Sigmoid colon (tissue), 7 donors: ENCODE measurements at regions of chr15 and their contacts with region 1.

Region 1: GRCh38 chr15:36658312-36658711 is 78.9 kb downstream of the CDIN1 start:
- DNase-seq: no peak
- H3K4me3 ChIP-seq: no peak overlapping the region
- H3K27ac ChIP-seq: no peak overlapping the region
- H3K4me1 ChIP-seq: peaks cover 0 to 32% (median 12%) of the 10 kb centered on the region in 4 donors
- H3K27me3 ChIP-seq: no peaks in the 10 kb centered on the region
- CTCF ChIP-seq: no peak
- EP300 ChIP-seq: peak in 1 of 4 donors; percentile 23
- POLR2A ChIP-seq: no peak

Region 2: GRCh38 chr15:36579792-36580431 is 78.4 kb before region 1 on chr15:
- intact Hi-C with region 1: loop called (anchors 5 kb)
- DNase-seq: peak; percentile 70
- H3K4me3 ChIP-seq: peak overlapping the region; percentile 58 to 76 (median 62)
- H3K27ac ChIP-seq: peak overlapping the region; percentile 82 to 88 (median 84)
- H3K4me1 ChIP-seq: peaks cover 0 to 21% (median 14%) of the 10 kb centered on the region in 4 donors
- H3K27me3 ChIP-seq: no peaks in the 10 kb centered on the region
- CTCF ChIP-seq: no peak
- EP300 ChIP-seq: no peak
- POLR2A ChIP-seq: no peak

Region 3: GRCh38 chr15:36810656-36811449 is 152.5 kb after region 1 on chr15:
- intact Hi-C with region 1: no loop called
- DNase-seq: no peak
- H3K4me3 ChIP-seq: no peak overlapping the region
- H3K27ac ChIP-seq: peak overlapping the region; percentile 65 to 76 (median 72)
- H3K4me1 ChIP-seq: peaks cover 0 to 83% (median 65%) of the 10 kb centered on the region in 4 donors
- H3K27me3 ChIP-seq: no peaks in the 10 kb centered on the region
- CTCF ChIP-seq: peak in 2 of 4 experiments; percentile 37 to 44
- EP300 ChIP-seq: peak in 1 of 4 donors; percentile 54
- POLR2A ChIP-seq: no peak

Region 4: GRCh38 chr15:36877796-36878683 is 219.7 kb after region 1 on chr15:
- intact Hi-C with region 1: loop called (anchors 10 kb)
- DNase-seq: no peak
- H3K4me3 ChIP-seq: peak overlapping the region in 2 of 4 donors; percentile 8 to 16
- H3K27ac ChIP-seq: peak overlapping the region in 3 of 4 donors; percentile 10 to 20 (median 13)
- H3K4me1 ChIP-seq: peaks cover 0 to 9% (median 3%) of the 10 kb centered on the region in 4 donors
- H3K27me3 ChIP-seq: peaks cover 0 to 9% (median 0%) of the 10 kb centered on the region in 3 donors
- CTCF ChIP-seq: no peak
- EP300 ChIP-seq: no peak
- POLR2A ChIP-seq: no peak